HepG2 (cell line): ENCODE measurements at regions of chr7 and their contacts with region 1.

Region 1: GRCh38 chr7:149690688-149691446 is 82.5 kb downstream of the ZNF467 start:
- DNase-seq: peak; percentile 92
- ATAC-seq: peak; percentile 95
- H3K4me3 ChIP-seq: peak overlapping the region; percentile 44 to 74 (median 66)
- H3K27ac ChIP-seq: peak overlapping the region; percentile 19
- H3K4me1 ChIP-seq: peaks cover 16% of the 10 kb centered on the region
- H3K27me3 ChIP-seq: no peaks in the 10 kb centered on the region; a peak in 2 of 5 replicates
- CTCF ChIP-seq: 0 out of 2 replicates have a peak, but pooled peaks have one; percentile 4
- EP300 ChIP-seq: no peak
- POLR2A ChIP-seq: no peak
- RAD21 ChIP-seq: peak; percentile 29; the same call in 1 of the 2 replicates

Region 2: GRCh38 chr7:149720372-149721248 is 29.7 kb after region 1 on chr7:
- CTCF ChIA-PET with region 1: no interaction called
- POLR2A ChIA-PET with region 1: no interaction called
- in situ Hi-C with region 1: no loop called
- intact Hi-C with region 1: loop called (anchors 2 kb)
- DNase-seq: peak; percentile 78
- ATAC-seq: peak; percentile 99
- H3K4me3 ChIP-seq: peak overlapping the region in 2 of 3 experiments; percentile 38 to 51; a peak in 2 of 6 replicates
- H3K27ac ChIP-seq: peak overlapping the region; percentile 21
- H3K4me1 ChIP-seq: peaks cover 33% of the 10 kb centered on the region
- H3K27me3 ChIP-seq: no peaks in the 10 kb centered on the region
- CTCF ChIP-seq: 0 out of 2 replicates have a peak, but pooled peaks have one; percentile 4
- EP300 ChIP-seq: no peak
- POLR2A ChIP-seq: no peak
- RAD21 ChIP-seq: no peak

Region 3: DNA sequence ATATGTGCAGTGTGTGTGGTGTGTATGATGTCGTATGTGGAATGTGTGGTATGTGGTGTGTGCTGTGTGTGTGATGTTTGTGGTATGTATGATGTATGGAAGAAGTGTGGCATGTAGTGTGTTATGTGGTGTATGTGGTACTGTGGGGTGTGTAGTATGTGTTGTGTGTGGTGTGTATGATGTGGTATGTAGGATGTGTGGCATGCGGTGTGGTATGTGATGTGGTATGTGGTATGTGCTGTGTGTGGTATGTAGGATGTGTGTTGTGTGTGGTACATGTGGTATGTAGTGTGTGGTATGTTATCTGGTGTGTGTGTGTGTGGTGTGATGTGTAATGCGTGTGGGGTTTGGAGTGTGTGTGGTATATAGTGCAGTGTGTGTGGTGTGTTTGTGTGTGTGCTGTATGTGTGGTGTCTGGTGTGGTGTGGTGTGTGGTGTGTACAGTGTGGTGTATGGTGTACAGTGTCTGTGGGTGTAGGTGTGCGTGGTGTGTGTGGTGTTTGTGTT is 312.5 kb after region 1 on chr7:
- CTCF ChIA-PET with region 1: no interaction called
- POLR2A ChIA-PET with region 1: no interaction called
- in situ Hi-C with region 1: no loop called
- intact Hi-C with region 1: no loop called
- DNase-seq: no peak
- ATAC-seq: no peak
- H3K4me3 ChIP-seq: no peak overlapping the region
- H3K27ac ChIP-seq: no peak overlapping the region
- H3K4me1 ChIP-seq: no peaks in the 10 kb centered on the region
- H3K27me3 ChIP-seq: no peaks in the 10 kb centered on the region
- CTCF ChIP-seq: no peak
- EP300 ChIP-seq: no peak
- POLR2A ChIP-seq: no peak
- RAD21 ChIP-seq: no peak